ENCODE measurements at regions of chr2 and their contacts with region 1.

Region 1: DNA sequence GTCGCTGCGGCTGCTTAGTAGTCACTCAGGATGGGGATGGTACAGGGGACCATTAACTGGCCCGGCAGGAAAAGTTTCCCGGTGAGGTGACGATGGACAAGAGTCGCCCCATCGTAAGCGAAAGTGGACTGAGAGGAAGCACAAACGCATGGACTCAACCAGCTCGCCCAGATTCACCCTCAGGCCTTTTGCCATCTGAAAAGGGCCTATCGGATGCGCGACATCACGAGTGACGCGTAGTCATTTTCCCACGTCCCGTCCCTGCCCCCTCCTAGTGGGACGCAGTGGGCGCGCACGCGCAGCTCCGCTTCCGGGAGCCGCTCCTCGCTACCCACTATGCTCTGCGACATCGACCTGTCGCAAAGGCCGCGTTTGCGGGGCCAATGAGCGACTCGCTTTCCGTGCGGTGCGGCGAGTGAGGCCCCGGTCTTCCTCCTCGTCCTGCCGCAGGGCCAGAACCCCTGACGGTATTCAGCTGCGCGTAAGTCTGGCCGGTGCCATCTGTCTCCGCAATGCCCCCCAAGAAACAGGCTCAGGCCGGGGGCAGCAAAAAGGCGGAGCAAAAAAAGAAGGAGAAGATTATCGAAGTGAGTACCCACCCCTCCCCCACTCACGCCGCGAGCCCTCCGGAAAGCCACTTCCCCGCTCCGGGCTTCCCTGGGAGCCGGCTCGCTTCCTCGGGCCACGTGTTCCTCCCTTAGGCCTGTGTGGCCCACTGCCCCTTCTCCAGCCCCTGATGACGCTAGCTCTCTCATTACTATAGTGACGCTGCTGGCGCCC is at the start of gene ZC3H15:
- DNase-seq: peak; percentile 93
- ATAC-seq: peak; percentile 90
- H3K4me3 Mint-ChIP-seq: peak within 1 kb of the TSS; percentile 98
- H3K27ac Mint-ChIP-seq: peak within 1 kb of the TSS; percentile 99
- H3K4me1 Mint-ChIP-seq: peaks cover 67% of the 10 kb centered on the region
- H3K27me3 Mint-ChIP-seq: no peaks in the 10 kb centered on the region
- CTCF ChIP-seq: no peak
- total RNA-seq, gene ZC3H15: 66.4 and 73.4 TPM in 2 replicates

Region 2: DNA sequence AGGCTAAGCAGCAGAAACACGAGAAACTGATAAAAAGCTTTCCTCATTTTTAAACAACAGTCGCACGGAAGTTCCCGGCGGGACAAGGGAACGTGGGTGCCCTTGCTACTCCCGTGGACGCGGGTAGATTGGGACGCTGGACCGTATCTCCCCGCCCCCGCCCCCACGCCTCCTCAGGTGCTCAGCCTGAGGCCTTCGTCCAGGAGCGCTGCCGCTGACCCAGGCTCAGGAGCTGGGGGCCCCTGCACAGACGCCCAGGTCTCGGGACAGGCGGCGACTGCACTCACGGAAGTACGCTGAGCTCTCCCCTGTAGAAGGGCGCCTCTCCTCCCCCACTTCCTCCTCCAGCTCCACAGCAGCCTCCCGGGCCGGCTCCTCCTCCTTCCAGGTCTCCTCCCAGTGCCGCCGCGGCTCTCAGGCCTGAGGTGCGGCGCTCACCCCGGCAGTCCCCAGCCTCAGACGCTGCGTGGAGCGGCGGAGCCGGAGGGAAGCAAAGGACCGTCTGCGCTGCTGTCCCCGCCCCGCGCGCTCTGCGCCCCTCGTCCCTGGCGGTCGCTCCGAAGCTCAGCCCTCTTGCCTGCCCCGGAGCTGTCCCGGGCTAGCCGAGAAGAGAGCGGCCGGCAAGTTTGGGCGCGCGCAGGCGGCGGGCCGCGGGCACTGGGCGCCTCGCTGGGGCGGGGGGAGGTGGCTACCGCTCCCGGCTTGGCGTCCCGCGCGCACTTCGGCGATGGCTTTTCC is 103.7 kb after region 1 on chr2 and contains the start of gene ITGAV:
- CTCF ChIA-PET with region 1: no interaction called
- POLR2A ChIA-PET with region 1: interaction called, 16 read pairs
- intact Hi-C with region 1: loop called (anchors 1 kb)
- DNase-seq: peak; percentile 53
- ATAC-seq: peak; percentile 93
- H3K4me3 Mint-ChIP-seq: peak within 1 kb of the TSS; percentile 81
- H3K27ac Mint-ChIP-seq: peak within 1 kb of the TSS; percentile 73
- H3K4me1 Mint-ChIP-seq: peaks cover 22% of the 10 kb centered on the region
- H3K27me3 Mint-ChIP-seq: no peaks in the 10 kb centered on the region
- CTCF ChIP-seq: no peak
- total RNA-seq, gene ITGAV: 2.6 and 4.1 TPM in 2 replicates